Heart left ventricle (tissue), 16 donors: ENCODE measurements at regions of chr12 and their contacts with region 1.

Region 1: GRCh38 chr12:42332301-42333285 is 6.6 kb downstream of the PPHLN1 start:
- DNase-seq: no peak
- ATAC-seq: peak in 3 of 4 donors; percentile 39 to 67 (median 44)
- H3K4me3 ChIP-seq: no peak overlapping the region
- H3K27ac ChIP-seq: no peak overlapping the region
- H3K4me1 ChIP-seq: peaks cover 0 to 28% (median 9%) of the 10 kb centered on the region in 12 donors
- H3K27me3 ChIP-seq: no peaks in the 10 kb centered on the region
- CTCF ChIP-seq: peak; percentile 56 to 81 (median 66)
- POLR2A ChIP-seq: no peak

Region 2: GRCh38 chr12:42372154-42372791 is 39.7 kb after region 1 on chr12:
- intact Hi-C with region 1: loop called in 1 of 10 experiments (anchors 5 kb)
- DNase-seq: peak in 1 of 5 donors; percentile 15
- ATAC-seq: peak in 3 of 4 donors; percentile 67 to 78 (median 71)
- H3K4me3 ChIP-seq: no peak overlapping the region
- H3K27ac ChIP-seq: no peak overlapping the region
- H3K4me1 ChIP-seq: no peaks in the 10 kb centered on the region
- H3K27me3 ChIP-seq: no peaks in the 10 kb centered on the region
- CTCF ChIP-seq: peak; percentile 60 to 81 (median 70)
- POLR2A ChIP-seq: no peak

Region 3: GRCh38 chr12:42385326-42385841 is 52.8 kb after region 1 on chr12:
- intact Hi-C with region 1: no loop called
- DNase-seq: no peak
- ATAC-seq: no peak
- H3K4me3 ChIP-seq: no peak overlapping the region
- H3K27ac ChIP-seq: no peak overlapping the region
- H3K4me1 ChIP-seq: peaks cover 0 to 14% (median 3%) of the 10 kb centered on the region in 12 donors
- H3K27me3 ChIP-seq: no peaks in the 10 kb centered on the region
- CTCF ChIP-seq: no peak
- POLR2A ChIP-seq: no peak

Region 4: DNA sequence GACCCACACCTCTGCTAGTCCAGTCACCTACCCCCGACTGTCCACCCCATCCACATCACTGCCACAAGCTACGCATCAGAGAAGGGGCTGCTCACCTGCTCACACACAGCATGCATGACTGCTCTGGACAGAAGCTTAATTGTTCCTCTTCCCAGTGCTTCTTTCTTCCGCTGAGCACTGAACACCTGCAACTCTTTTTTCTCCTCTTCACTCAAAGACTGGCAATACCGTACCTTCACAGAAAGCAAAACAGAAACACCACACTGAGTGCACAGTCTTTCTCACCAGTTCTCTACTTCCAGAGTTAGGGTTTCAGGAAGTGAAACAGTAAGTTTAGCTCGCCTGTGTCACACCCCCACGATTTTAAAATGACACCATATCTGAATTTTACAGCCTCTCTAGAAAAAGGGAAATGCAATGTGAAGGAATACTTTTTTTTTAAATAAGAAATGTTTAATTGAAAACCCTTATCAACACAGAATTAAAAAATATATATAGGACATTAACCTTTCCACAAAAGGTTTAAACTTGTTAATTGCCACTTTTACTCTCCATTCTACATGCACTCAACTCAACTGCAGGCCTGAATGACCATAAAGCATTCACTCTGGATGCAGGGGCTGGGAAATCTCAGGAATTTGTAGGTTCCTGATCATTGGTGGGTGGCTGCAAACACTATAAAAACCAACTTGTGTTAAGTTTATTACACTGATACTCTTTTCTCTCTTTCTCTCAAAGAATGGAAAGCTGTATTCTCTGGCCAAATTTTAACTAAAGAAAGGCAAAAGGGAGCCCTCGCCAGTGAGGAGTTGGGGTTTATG is 137.0 kb after region 1 on chr12:
- intact Hi-C with region 1: loop called in 1 of 10 experiments (anchors 10 kb)
- DNase-seq: no peak
- ATAC-seq: peak in 1 of 4 donors; percentile 31
- H3K4me3 ChIP-seq: peak overlapping the region in 5 of 12 donors; percentile 3 to 52 (median 7)
- H3K27ac ChIP-seq: peak overlapping the region in 5 of 12 donors; percentile 32 to 67 (median 61)
- H3K4me1 ChIP-seq: peaks cover 3 to 64% (median 37%) of the 10 kb centered on the region in 12 donors
- H3K27me3 ChIP-seq: no peaks in the 10 kb centered on the region
- CTCF ChIP-seq: no peak
- POLR2A ChIP-seq: no peak